ENCODE measurements at regions of chr10 and their contacts with region 1.

Region 1: GRCh38 chr10:5583525-5584175 is 58.9 kb downstream of the CALML3 start:
- DNase-seq: peak; percentile 98
- H3K4me3 ChIP-seq: peak overlapping the region in 2 of 3 experiments; percentile 4 to 32
- H3K27ac ChIP-seq: peak overlapping the region; percentile 100
- H3K4me1 ChIP-seq: peaks cover 34% of the 10 kb centered on the region
- H3K27me3 ChIP-seq: no peaks in the 10 kb centered on the region
- CTCF ChIP-seq: peak in 1 of 2 donors; percentile 12

Region 2: DNA sequence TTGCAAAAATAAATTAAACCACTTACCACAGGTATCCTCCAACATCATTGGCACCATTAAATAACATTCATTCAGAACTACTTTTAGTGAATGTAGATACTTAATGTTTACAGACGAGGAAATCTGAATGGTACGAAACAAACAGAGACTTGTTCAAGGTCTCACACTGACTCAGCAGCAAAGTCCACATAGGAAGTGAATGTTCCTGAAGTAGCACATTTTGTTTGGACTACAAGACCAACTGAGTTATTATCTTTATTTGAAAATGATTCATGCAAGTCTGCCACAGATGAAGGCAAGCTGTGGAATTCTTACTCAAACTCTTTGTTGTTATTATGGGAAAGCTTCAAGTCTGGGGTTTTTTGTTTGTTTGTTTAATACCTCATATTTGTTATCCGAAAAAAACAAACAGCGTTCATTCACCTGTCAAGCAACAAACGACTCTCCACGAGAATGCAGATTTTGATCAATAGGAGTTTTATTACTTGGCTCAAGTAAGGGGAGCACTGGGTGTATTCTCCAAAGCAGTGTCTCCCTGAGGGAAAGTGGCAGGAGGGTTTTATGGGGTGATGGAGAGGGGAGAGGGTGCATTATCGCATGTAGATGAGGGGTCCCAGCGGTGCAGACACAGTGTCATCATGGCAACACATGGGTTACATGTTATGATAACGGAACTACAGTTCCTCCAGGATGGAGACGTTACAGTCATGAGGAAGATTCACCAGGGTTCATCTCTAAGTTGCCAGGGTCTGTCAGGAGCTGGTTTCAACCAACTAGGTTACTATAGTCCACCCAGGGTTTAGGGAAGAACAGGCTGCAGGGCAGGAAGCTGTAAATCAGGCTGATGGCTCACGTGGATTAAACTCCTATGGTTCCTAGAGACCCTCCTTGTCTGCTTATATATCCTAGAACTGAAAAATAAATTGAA is 905.4 kb before region 1 on chr10:
- CTCF ChIA-PET with region 1: no interaction called
- dilution Hi-C with region 1: loop called (anchors 25 kb)
- in situ Hi-C with region 1: no loop called
- intact Hi-C with region 1: no loop called
- DNase-seq: peak; percentile 94
- H3K4me3 ChIP-seq: peak overlapping the region in 2 of 3 experiments; percentile 46 to 61
- H3K27ac ChIP-seq: peak overlapping the region; percentile 100
- H3K4me1 ChIP-seq: peaks cover 43% of the 10 kb centered on the region
- H3K27me3 ChIP-seq: no peaks in the 10 kb centered on the region
- CTCF ChIP-seq: no peak

Region 3: GRCh38 chr10:5525561-5526341 is 57.9 kb before region 1 on chr10:
- CTCF ChIA-PET with region 1: no interaction called
- dilution Hi-C with region 1: no loop called
- in situ Hi-C with region 1: no loop called
- intact Hi-C with region 1: loop called (anchors 1 kb)
- DNase-seq: peak; percentile 90
- H3K4me3 ChIP-seq: peak overlapping the region; percentile 6 to 46 (median 43)
- H3K27ac ChIP-seq: peak overlapping the region; percentile 69
- H3K4me1 ChIP-seq: peaks cover 29% of the 10 kb centered on the region
- H3K27me3 ChIP-seq: no peaks in the 10 kb centered on the region
- CTCF ChIP-seq: no peak

Region 4: DNA sequence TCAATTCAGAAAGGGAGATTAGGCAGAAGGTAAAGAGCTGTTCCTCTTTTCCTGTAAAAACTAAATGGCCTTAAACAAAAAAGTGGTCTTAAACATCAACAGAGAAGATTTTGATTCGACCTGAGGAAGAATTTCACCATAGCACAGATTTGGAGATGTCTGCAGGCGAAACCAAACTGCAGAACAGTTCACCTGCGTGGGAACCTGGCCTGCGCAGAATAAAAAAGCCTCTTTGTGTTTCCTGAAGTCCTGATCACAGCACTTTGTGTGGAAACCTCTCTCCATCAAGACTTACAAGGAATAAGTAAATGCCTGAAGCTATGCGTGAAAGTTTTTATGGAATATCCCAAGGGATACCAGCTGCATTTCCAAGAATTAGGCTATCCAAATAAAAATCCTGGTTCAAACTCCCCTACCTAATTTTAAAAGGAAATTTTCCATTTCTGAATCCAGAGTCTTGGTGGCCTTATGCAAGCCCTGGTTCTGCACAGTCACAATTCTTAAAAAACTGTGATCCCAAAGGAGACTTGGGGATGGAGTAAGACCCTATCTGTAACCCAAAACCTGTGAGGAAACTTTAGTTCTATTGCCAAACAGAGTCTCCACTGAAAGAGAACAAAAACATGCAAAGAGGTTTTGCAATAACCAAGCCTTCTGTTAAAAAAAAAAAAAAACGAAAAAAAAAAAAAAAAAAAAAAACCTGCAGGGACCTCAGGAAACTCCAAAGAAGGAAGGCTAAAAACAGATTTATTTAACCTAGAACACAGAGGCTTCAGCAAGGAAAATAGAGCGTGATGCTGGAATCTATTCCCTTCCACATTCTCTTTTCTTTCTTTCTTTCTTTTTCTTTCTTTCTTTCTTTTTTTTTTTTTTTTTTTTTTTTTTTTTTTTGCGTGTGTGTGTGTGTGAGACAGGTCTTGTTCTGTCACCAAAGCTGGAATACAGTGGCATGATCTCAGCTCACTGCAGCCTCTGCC is 48.5 kb before region 1 on chr10:
- CTCF ChIA-PET with region 1: interaction called, 3 read pairs
- dilution Hi-C with region 1: no loop called
- in situ Hi-C with region 1: no loop called
- intact Hi-C with region 1: loop called (anchors 2 kb)
- DNase-seq: peak; percentile 63
- H3K4me3 ChIP-seq: no peak overlapping the region
- H3K27ac ChIP-seq: peak overlapping the region; percentile 93
- H3K4me1 ChIP-seq: peaks cover 44% of the 10 kb centered on the region
- H3K27me3 ChIP-seq: no peaks in the 10 kb centered on the region
- CTCF ChIP-seq: no peak

Region 5: DNA sequence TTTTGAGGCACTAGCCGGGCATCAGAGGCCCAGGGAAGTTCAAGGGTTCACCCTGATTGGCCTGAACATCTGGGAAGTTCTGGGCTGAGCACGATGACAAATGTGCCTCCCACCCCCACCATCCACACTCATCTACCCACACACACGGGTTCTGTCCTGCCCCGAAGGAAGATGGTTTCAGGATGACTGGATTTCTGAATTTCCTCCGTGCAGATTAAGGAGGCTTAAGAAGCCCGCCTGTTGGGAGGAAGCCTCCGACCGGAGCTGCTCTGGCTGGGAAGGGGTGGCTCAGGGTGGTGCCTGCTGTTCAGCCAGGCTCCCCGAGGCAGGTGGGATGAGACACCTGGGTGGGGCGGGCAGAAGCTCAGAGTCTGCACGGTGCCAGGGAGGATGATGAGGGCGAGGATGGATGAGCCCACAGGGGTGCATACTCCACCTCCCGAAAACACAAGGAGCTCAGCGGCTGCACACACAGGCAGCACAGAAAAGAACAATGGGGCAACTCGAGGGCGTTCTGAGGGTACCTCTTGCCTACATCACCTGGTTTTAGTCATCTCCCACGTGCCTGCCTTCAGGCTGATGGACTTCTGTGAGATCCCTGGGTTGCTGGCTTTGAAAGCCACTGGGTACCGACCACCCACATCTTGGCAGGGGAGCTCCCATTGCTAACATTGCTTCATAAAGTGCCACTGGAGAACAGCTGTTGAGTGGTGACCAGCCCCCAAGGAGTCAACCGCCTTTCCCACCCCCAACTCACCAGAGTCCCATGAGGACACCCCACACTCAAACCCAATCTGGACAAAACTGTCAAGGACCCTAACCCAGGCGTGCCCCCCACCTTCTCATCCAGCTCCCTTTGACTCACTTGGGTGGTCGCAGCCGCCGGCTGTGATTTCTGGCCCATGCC is 17.7 kb before region 1 on chr10:
- CTCF ChIA-PET with region 1: no interaction called
- dilution Hi-C with region 1: no loop called
- in situ Hi-C with region 1: no loop called
- intact Hi-C with region 1: loop called (anchors 1 kb)
- DNase-seq: peak; percentile 100
- H3K4me3 ChIP-seq: no peak overlapping the region
- H3K27ac ChIP-seq: peak overlapping the region; percentile 100
- H3K4me1 ChIP-seq: peaks cover 44% of the 10 kb centered on the region
- H3K27me3 ChIP-seq: no peaks in the 10 kb centered on the region
- CTCF ChIP-seq: no peak

Region 6: GRCh38 chr10:5595591-5596590 is 12.2 kb after region 1 on chr10:
- CTCF ChIA-PET with region 1: no interaction called
- dilution Hi-C with region 1: no loop called
- in situ Hi-C with region 1: no loop called
- intact Hi-C with region 1: loop called (anchors 1 kb)
- DNase-seq: peak; percentile 99
- H3K4me3 ChIP-seq: peak overlapping the region; percentile 12 to 36 (median 30)
- H3K27ac ChIP-seq: peak overlapping the region; percentile 90
- H3K4me1 ChIP-seq: peaks cover 31% of the 10 kb centered on the region
- H3K27me3 ChIP-seq: no peaks in the 10 kb centered on the region
- CTCF ChIP-seq: no peak

Region 7: GRCh38 chr10:5614155-5614721 is 30.6 kb after region 1 on chr10:
- CTCF ChIA-PET with region 1: no interaction called
- dilution Hi-C with region 1: loop called (anchors 5 kb)
- in situ Hi-C with region 1: no loop called
- intact Hi-C with region 1: loop called (anchors 1 kb)
- DNase-seq: no peak
- H3K4me3 ChIP-seq: no peak overlapping the region
- H3K27ac ChIP-seq: peak overlapping the region; percentile 46
- H3K4me1 ChIP-seq: peaks cover 71% of the 10 kb centered on the region
- H3K27me3 ChIP-seq: no peaks in the 10 kb centered on the region
- CTCF ChIP-seq: no peak